B cell (primary cell): ENCODE measurements at regions of chr11 and their contacts with region 1.

Region 1: GRCh38 chr11:11841723-11842420 is at the start of gene USP47:
- DNase-seq: peak; percentile 96
- ATAC-seq: peak; percentile 81
- H3K4me3 ChIP-seq: peak within 1 kb of the TSS; percentile 85 to 95 (median 92)
- H3K4me3 Mint-ChIP-seq: no peak within 1 kb of the TSS
- H3K27ac ChIP-seq: peak within 1 kb of the TSS; percentile 87 to 98
- H3K27ac Mint-ChIP-seq: no peak within 1 kb of the TSS
- H3K4me1 ChIP-seq: peaks cover 31 to 43% of the 10 kb centered on the region in 2 donors
- H3K4me1 Mint-ChIP-seq: peaks cover 28% of the 10 kb centered on the region
- H3K27me3 ChIP-seq: peaks cover 0 to 6% (median 2%) of the 10 kb centered on the region in 4 experiments
- H3K27me3 Mint-ChIP-seq: peaks cover 9% of the 10 kb centered on the region
- CTCF ChIP-seq: peak; percentile 40
- total RNA-seq, gene USP47: 52.9 and 61.1 TPM in 2 replicates

Region 2: GRCh38 chr11:10255388-10256125 is 1586.3 kb before region 1 on chr11:
- CTCF ChIA-PET with region 1: no interaction called
- POLR2A ChIA-PET with region 1: no interaction called
- intact Hi-C with region 1: no loop called
- DNase-seq: no peak
- ATAC-seq: no peak
- H3K4me3 ChIP-seq: no peak overlapping the region
- H3K4me3 Mint-ChIP-seq: no peak overlapping the region
- H3K27ac ChIP-seq: no peak overlapping the region
- H3K27ac Mint-ChIP-seq: no peak overlapping the region
- H3K4me1 ChIP-seq: no peaks in the 10 kb centered on the region
- H3K4me1 Mint-ChIP-seq: peaks cover 10% of the 10 kb centered on the region
- H3K27me3 ChIP-seq: no peaks in the 10 kb centered on the region
- H3K27me3 Mint-ChIP-seq: no peaks in the 10 kb centered on the region
- CTCF ChIP-seq: no peak

Region 3: GRCh38 chr11:10293423-10294289 is 1548.2 kb before region 1 on chr11 and contains the start of gene SBF2:
- CTCF ChIA-PET with region 1: no interaction called
- POLR2A ChIA-PET with region 1: no interaction called
- intact Hi-C with region 1: loop called (anchors 5 kb)
- DNase-seq: peak; percentile 89
- ATAC-seq: peak; percentile 73
- H3K4me3 ChIP-seq: peak within 1 kb of the TSS; percentile 49 to 92 (median 70)
- H3K4me3 Mint-ChIP-seq: peak within 1 kb of the TSS; percentile 87
- H3K27ac ChIP-seq: peak within 1 kb of the TSS in 1 of 2 donors; percentile 46
- H3K27ac Mint-ChIP-seq: peak within 1 kb of the TSS; percentile 42
- H3K4me1 ChIP-seq: peaks cover 19 to 20% of the 10 kb centered on the region in 2 donors
- H3K4me1 Mint-ChIP-seq: peaks cover 24% of the 10 kb centered on the region
- H3K27me3 ChIP-seq: peaks cover 0 to 25% (median 13%) of the 10 kb centered on the region in 4 experiments
- H3K27me3 Mint-ChIP-seq: peaks cover 40% of the 10 kb centered on the region
- CTCF ChIP-seq: no peak
- total RNA-seq, gene SBF2: 17.7 and 20.6 TPM in 2 replicates

Region 4: DNA sequence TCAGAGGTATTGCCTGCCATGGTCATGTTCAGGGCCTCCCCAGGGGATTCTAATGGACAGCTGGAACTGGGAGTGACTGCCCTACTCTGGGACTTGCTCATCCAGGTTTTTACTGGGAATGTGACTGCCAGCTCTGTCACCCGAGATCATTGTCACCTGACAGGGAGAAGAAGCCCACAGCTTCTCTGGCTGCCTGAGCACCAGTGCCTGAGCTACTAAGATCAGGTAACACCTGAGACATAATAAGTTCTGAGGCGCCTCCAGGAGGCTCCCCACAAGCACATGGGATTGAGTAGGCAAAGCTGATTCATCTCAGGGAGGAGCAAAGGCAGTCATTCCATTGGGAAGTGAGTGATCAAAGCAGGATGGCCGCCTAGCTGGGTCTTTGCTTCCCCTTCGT is 135.8 kb before region 1 on chr11:
- CTCF ChIA-PET with region 1: no interaction called
- POLR2A ChIA-PET with region 1: no interaction called
- intact Hi-C with region 1: no loop called
- DNase-seq: no peak
- ATAC-seq: no peak
- H3K4me3 ChIP-seq: no peak overlapping the region
- H3K4me3 Mint-ChIP-seq: no peak overlapping the region
- H3K27ac ChIP-seq: no peak overlapping the region
- H3K27ac Mint-ChIP-seq: no peak overlapping the region
- H3K4me1 ChIP-seq: no peaks in the 10 kb centered on the region
- H3K4me1 Mint-ChIP-seq: no peaks in the 10 kb centered on the region
- H3K27me3 ChIP-seq: peaks cover 0 to 9% (median 0%) of the 10 kb centered on the region in 4 experiments
- H3K27me3 Mint-ChIP-seq: peaks cover 34% of the 10 kb centered on the region
- CTCF ChIP-seq: no peak

Region 5: GRCh38 chr11:11876458-11876857 is 34.6 kb after region 1 on chr11:
- CTCF ChIA-PET with region 1: interaction called, 9 read pairs
- POLR2A ChIA-PET with region 1: no interaction called
- intact Hi-C with region 1: loop called (anchors 5 kb)
- DNase-seq: no peak
- ATAC-seq: no peak
- H3K4me3 ChIP-seq: no peak overlapping the region
- H3K4me3 Mint-ChIP-seq: no peak overlapping the region
- H3K27ac ChIP-seq: no peak overlapping the region
- H3K27ac Mint-ChIP-seq: no peak overlapping the region
- H3K4me1 ChIP-seq: peaks cover 6 to 13% of the 10 kb centered on the region in 2 donors
- H3K4me1 Mint-ChIP-seq: peaks cover 23% of the 10 kb centered on the region
- H3K27me3 ChIP-seq: no peaks in the 10 kb centered on the region
- H3K27me3 Mint-ChIP-seq: no peaks in the 10 kb centered on the region
- CTCF ChIP-seq: no peak

Region 6: DNA sequence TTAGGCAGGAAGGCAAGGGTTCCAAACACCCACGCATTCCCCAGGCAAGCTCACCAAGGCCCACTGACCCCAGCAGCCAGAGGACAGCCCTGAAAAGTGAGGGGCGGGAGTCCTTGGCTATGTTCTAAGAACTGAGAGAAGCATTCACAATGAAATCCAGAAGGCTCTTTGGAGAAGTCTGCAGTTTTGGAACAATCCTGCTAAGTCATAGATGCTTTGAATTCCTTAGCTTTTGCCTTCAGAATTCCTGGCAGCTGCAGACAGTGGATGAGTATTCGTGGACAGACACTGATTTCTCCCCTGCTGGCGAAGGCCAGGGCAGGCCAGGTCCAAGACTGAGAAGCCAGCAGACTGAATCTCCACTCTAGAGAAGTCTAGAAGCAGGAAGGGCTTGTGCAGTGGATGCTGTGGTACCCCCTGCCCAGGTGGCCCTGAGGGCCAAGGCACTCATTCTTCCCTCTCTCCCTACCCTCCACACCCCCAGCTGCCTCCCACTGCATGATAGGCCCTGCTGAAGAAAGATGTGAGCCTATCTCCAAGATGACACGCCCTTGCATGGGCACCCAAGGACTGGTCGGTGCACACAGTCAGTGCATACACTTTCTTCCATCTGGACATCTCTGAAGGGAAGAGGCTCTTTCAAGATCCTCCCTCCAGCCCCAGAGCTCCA is 699.2 kb after region 1 on chr11:
- CTCF ChIA-PET with region 1: no interaction called
- POLR2A ChIA-PET with region 1: no interaction called
- intact Hi-C with region 1: no loop called
- DNase-seq: no peak
- ATAC-seq: no peak
- H3K4me3 ChIP-seq: no peak overlapping the region
- H3K4me3 Mint-ChIP-seq: no peak overlapping the region
- H3K27ac ChIP-seq: no peak overlapping the region
- H3K27ac Mint-ChIP-seq: no peak overlapping the region
- H3K4me1 ChIP-seq: no peaks in the 10 kb centered on the region
- H3K4me1 Mint-ChIP-seq: no peaks in the 10 kb centered on the region
- H3K27me3 ChIP-seq: peaks cover 0 to 4% (median 0%) of the 10 kb centered on the region in 4 experiments
- H3K27me3 Mint-ChIP-seq: peaks cover 5% of the 10 kb centered on the region
- CTCF ChIP-seq: no peak